GM13976 (cell line): ENCODE measurements at regions of chr7 and their contacts with region 1.

Region 1: DNA sequence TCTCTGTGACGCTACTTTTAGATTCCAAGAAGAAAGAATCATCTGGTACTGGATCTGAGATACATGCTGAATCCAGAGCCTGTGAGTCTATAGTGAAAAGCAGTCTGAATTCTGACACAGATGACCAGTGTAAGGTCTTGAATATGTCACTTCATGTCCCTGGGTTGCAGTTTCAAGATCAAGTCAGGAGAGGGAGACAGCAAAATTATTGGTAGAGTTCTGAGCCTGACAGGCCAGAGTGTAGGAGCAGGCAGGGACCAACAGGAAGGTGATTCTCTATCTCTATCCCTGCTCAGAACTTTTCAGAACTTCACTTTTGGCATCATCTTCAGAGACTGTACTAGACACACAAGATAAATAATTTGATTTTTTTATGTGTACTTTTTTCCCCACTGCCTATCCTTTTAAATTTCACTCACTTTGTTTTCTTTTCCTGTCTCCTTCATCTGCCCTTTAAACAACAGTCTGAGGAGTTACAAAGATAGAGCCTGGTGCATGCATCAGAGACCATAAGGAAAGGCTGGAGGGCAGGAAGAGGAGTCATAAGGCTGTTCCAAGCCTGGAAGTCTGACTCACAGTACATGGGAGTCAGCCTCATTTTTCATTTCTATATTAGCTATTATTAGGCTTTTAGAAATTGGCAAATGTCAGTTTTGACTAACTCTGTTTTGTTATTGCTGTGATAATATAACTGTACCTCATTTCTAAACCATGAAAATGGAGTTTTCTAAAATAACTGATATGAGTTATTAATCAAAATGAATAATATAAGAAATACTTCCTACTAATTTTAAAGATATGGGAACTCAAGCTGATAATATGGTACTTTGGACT is 120.2 kb upstream of the TMEM229A start:
- DNase-seq: no peak
- CTCF ChIP-seq: no peak

Region 2: GRCh38 chr7:123929107-123929506 is 224.0 kb before region 1 on chr7:
- in situ Hi-C with region 1: no loop called
- DNase-seq: no peak
- CTCF ChIP-seq: no peak

Region 3: GRCh38 chr7:124219681-124220080 is 66.6 kb after region 1 on chr7:
- in situ Hi-C with region 1: no loop called
- DNase-seq: no peak
- CTCF ChIP-seq: no peak

Region 4: DNA sequence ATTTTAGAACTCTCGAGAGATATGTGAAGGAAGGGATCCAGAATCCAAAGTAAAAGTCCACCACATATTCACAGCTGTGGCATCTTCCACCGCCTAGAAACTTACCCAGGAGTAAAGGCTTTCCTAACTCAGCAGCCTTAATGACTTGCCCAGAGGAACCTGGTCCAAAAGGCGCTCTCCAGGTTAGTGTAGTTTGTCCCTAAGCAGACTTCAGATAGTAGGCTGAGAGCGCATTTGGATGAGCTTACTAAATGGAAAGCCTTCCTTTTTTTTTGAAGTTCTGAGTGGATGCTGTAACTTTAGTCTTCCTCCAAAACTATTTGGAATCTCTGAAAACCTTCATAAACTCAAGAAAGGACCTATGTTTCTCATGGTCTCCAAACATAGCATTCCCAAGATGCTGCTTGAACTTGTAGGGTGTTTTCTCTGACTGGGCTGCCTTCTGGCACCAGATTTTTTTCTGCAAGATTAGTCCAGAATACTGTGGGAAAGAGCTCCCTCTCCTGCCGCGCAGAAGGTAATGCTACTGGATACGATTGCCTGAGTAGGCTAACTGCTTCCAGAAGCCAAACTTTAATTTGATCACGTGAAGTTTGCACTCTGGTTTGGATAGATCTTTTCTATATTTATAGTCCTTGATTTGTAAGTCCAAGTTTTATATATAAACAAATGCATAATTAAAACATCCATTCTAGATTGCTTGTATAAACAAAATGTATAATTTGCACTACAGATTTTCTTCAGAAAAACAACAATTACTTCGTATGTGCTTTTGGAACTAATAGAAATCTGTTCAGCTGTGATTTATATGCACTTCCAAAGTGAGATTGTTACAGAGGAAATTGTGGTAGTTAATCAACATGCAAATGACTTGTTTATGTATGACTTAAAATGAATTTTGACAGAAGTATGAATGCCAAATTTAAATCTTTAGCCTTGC is 632.1 kb after region 1 on chr7:
- in situ Hi-C with region 1: loop called (anchors 25 kb)
- DNase-seq: peak; percentile 54
- CTCF ChIP-seq: peak; percentile 68